Cardiac septum (tissue), 1 donor: ENCODE measurements at regions of chr12 and their contacts with region 1.

Region 1: GRCh38 chr12:79174626-79175025 is 310.1 kb downstream of the SYT1 start:
- DNase-seq: no peak

Region 2: DNA sequence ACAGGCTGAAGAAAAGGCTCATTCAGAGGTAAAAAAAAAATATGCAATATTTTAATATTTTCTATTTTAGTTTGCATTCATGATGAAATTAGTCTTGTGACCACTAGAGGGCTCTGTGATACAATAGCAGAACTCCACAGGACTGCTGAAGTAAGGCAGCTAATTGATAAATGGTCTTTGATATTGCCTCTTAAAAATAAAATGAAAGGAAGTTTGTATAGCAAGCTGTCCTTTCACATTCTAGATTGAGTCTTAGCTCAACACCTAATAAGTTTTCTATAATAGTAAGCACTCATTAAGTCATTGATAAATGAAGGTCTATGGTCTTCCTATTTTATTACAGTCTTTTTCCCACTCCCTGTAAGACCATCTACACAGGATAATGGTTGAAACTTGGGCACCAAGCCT is 1028.3 kb before region 1 on chr12:
- intact Hi-C with region 1: loop called (anchors 10 kb)
- DNase-seq: no peak